Astrocyte of the cerebellum (primary cell): ENCODE measurements at regions of chr10 and their contacts with region 1.

Region 1: DNA sequence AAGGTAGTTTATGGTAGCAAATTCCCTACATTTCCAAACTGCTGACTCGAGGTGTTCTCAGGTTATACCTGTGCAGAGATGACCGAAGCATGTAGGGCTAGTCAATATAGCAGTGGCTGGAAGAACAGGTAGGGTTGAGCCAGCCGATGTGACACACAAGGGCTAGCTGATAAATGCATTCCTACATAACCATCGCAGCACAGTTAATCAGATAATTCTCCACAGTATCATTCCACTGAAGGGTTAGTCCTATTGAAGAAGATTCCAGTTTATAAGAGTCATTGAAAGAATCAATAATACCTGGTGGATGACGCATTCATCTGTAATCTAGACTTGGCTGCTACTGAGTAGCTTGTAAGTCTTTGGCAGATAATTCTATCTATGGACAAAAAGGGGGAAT is 220.0 kb downstream of the KIF20B start:
- DNase-seq: peak; percentile 2
- H3K4me3 ChIP-seq: no peak overlapping the region
- CTCF ChIP-seq: no peak

Region 2: GRCh38 chr10:89845541-89846277 is 75.7 kb before region 1 on chr10:
- in situ Hi-C with region 1: loop called (anchors 5 kb)
- DNase-seq: peak; percentile 15
- H3K4me3 ChIP-seq: no peak overlapping the region
- CTCF ChIP-seq: no peak

Region 3: GRCh38 chr10:89861584-89862301 is 59.7 kb before region 1 on chr10:
- in situ Hi-C with region 1: no loop called
- DNase-seq: no peak
- H3K4me3 ChIP-seq: no peak overlapping the region
- CTCF ChIP-seq: no peak

Region 4: DNA sequence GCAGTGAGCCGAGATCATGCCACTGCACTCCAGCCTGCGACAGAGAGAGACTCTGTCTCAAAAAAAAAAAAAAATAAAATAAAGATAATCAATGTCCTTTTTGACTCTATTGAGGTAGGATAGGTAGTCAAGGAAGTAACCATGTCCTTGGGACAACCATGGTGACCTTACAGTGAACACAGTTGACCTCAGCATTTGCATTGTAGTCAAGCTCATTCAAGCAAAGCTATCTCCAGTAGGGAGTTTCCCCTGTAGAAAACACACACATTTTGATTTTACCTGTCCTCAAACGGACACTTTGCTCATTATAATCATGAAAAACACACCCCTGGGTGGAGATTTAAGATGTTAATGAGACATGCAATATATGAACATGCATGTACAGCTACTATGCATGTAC is 48.4 kb before region 1 on chr10:
- in situ Hi-C with region 1: no loop called
- DNase-seq: no peak
- H3K4me3 ChIP-seq: no peak overlapping the region
- CTCF ChIP-seq: no peak

Region 5: GRCh38 chr10:89963451-89964102 is 42.2 kb after region 1 on chr10:
- in situ Hi-C with region 1: no loop called
- DNase-seq: peak; percentile 19
- H3K4me3 ChIP-seq: no peak overlapping the region
- CTCF ChIP-seq: no peak

Region 6: GRCh38 chr10:90047243-90047729 is 125.9 kb after region 1 on chr10:
- in situ Hi-C with region 1: no loop called
- DNase-seq: no peak
- H3K4me3 ChIP-seq: no peak overlapping the region
- CTCF ChIP-seq: no peak